ENCODE measurements at regions of chr10 and their contacts with region 1.

Region 1: GRCh38 chr10:29735596-29736318 is 101.0 kb upstream of the SVIL start:
- DNase-seq: peak; percentile 83
- H3K4me3 Mint-ChIP-seq: peak overlapping the region; percentile 81
- H3K27ac Mint-ChIP-seq: no peak overlapping the region
- H3K4me1 Mint-ChIP-seq: peaks cover 19% of the 10 kb centered on the region
- H3K27me3 Mint-ChIP-seq: no peaks in the 10 kb centered on the region
- CTCF ChIP-seq: peak; percentile 85

Region 2: GRCh38 chr10:29530109-29530976 is 205.4 kb before region 1 on chr10:
- CTCF ChIA-PET with region 1: no interaction called
- POLR2A ChIA-PET with region 1: no interaction called
- intact Hi-C with region 1: loop called (anchors 2 kb)
- DNase-seq: no peak
- H3K4me3 Mint-ChIP-seq: no peak overlapping the region
- H3K27ac Mint-ChIP-seq: no peak overlapping the region
- H3K4me1 Mint-ChIP-seq: peaks cover 3% of the 10 kb centered on the region
- H3K27me3 Mint-ChIP-seq: no peaks in the 10 kb centered on the region
- CTCF ChIP-seq: no peak

Region 3: GRCh38 chr10:29543715-29544114 is 192.0 kb before region 1 on chr10:
- CTCF ChIA-PET with region 1: no interaction called
- POLR2A ChIA-PET with region 1: no interaction called
- intact Hi-C with region 1: no loop called
- DNase-seq: no peak
- H3K4me3 Mint-ChIP-seq: no peak overlapping the region
- H3K27ac Mint-ChIP-seq: no peak overlapping the region
- H3K4me1 Mint-ChIP-seq: peaks cover 6% of the 10 kb centered on the region
- H3K27me3 Mint-ChIP-seq: no peaks in the 10 kb centered on the region
- CTCF ChIP-seq: no peak

Region 4: GRCh38 chr10:29635711-29636144 is 100.0 kb before region 1 on chr10:
- CTCF ChIA-PET with region 1: no interaction called
- POLR2A ChIA-PET with region 1: interaction called, 12 read pairs
- intact Hi-C with region 1: loop called (anchors 2 kb)
- DNase-seq: no peak
- H3K4me3 Mint-ChIP-seq: peak overlapping the region; percentile 78
- H3K27ac Mint-ChIP-seq: peak overlapping the region; percentile 96
- H3K4me1 Mint-ChIP-seq: peaks cover 45% of the 10 kb centered on the region
- H3K27me3 Mint-ChIP-seq: no peaks in the 10 kb centered on the region
- CTCF ChIP-seq: no peak

Region 5: GRCh38 chr10:29757551-29758297 is 22.0 kb after region 1 on chr10:
- CTCF ChIA-PET with region 1: no interaction called
- POLR2A ChIA-PET with region 1: no interaction called
- intact Hi-C with region 1: no loop called
- DNase-seq: peak; percentile 85
- H3K4me3 Mint-ChIP-seq: no peak overlapping the region
- H3K27ac Mint-ChIP-seq: no peak overlapping the region
- H3K4me1 Mint-ChIP-seq: peaks cover 13% of the 10 kb centered on the region
- H3K27me3 Mint-ChIP-seq: no peaks in the 10 kb centered on the region
- CTCF ChIP-seq: no peak

Region 6: DNA sequence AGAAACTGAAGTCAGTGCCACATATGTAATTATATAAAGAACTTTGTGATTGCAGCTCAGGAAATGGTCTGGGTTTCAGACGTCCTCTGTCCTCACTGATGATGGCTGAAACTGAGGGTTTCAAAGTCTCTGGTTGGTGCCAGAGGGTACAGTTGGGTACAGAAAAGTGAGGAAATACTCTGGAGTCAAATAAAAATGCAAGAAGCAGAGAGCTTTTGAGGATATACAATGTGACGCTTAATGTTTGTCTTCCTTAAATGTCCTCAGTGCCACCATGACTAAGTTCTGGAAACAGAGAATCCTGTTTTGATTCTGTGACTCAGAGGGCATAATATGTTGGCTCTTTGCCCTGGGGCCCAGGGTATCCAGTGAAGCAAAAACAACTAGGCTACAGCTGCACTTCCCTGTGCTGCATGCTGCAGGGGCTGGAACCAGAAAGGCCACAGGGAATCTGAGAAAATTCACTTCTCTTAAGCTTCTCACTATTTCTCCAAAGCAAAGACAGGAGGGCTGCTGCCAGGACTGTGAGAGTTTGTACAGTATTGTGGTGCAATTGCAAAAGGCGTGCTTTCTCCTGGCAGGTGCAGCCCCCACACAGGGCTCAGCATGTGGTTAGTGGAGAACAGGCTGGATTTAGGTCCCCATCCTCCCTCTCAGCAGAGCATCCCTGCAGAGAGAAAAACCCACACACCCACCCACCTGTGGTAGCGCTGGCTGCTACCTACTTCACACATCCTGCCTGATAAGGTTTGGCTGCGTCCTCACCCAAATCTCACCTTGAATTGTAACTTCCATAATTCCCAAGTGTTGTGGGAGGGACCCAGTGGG is 68.5 kb after region 1 on chr10:
- CTCF ChIA-PET with region 1: no interaction called
- POLR2A ChIA-PET with region 1: interaction called, 4 read pairs
- intact Hi-C with region 1: loop called (anchors 5 kb)
- DNase-seq: peak; percentile 98
- H3K4me3 Mint-ChIP-seq: peak overlapping the region; percentile 12
- H3K27ac Mint-ChIP-seq: peak overlapping the region; percentile 97
- H3K4me1 Mint-ChIP-seq: peaks cover 48% of the 10 kb centered on the region
- H3K27me3 Mint-ChIP-seq: no peaks in the 10 kb centered on the region
- CTCF ChIP-seq: no peak

Region 7: DNA sequence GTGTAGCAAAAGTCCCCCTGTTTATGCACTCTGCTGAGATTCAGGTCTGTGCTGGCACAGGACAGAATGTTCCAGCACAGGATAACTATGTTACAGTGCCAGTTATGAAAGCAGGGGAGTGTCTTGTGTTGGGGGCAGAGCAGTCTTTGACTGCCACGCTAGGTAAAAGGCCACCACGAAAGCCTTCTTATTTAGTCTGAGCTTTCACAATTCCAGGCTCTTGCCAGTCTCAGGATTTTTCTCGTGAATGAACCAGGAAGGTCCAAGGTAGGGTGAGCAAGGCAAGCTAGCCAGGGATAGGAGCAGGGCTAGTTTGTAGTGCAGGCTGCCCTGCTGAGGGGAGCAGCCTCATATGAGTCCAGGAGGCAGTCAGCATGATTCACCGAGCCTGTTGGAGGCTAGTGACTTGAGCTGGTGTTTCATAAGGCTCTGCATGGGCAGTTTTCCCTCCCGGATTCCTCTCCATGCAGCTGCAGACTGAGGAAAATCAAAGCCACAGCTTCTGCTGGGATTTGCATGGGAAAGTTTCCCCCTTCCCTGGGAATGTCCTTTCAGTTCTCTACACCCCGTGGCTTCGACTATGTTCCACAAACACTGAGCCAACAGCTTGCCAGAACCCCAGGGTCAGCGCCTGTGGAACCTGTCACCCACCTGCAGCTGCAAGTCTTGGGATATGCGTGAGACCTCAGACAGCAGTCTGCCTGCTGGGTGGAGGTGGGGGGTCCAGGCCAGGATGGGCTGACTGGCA is 211.4 kb after region 1 on chr10:
- CTCF ChIA-PET with region 1: interaction called, 4 read pairs
- POLR2A ChIA-PET with region 1: interaction called, 7 read pairs
- intact Hi-C with region 1: loop called (anchors 5 kb)
- DNase-seq: peak; percentile 95
- H3K4me3 Mint-ChIP-seq: peak overlapping the region; percentile 61
- H3K27ac Mint-ChIP-seq: peak overlapping the region; percentile 99
- H3K4me1 Mint-ChIP-seq: peaks cover 80% of the 10 kb centered on the region
- H3K27me3 Mint-ChIP-seq: no peaks in the 10 kb centered on the region
- CTCF ChIP-seq: no peak

Measured in MCF 10A (cell line).